ENCODE measurements at regions of chr1 and their contacts with region 1.

Region 1: GRCh38 chr1:205967555-205968335 is 24.5 kb upstream of the SLC26A9 start:
- DNase-seq: no peak
- ATAC-seq: no peak
- H3K4me3 Mint-ChIP-seq: no peak overlapping the region
- H3K27ac Mint-ChIP-seq: no peak overlapping the region
- H3K4me1 Mint-ChIP-seq: no peaks in the 10 kb centered on the region
- H3K27me3 Mint-ChIP-seq: no peaks in the 10 kb centered on the region

Region 2: DNA sequence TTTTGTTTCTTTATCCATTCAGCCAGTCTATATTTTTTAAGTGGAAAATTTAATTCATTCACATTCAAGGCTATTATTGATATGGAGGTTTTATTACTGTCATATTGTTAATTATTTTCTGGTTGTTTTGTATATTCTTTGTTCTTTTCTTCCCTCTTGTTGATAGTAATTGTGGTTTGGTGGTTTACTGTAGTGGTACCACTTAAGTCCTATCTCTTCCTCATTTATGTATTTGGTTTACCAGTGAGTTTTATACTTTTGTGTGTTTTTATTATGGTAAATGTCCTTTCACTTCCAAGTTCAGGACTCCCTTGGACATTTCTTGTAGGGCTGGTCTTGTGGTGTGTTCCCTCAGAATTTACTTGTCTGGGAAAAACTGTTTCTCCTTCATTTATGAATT is 89.7 kb before region 1 on chr1:
- CTCF ChIA-PET with region 1: no interaction called
- POLR2A ChIA-PET with region 1: interaction called, 10 read pairs
- intact Hi-C with region 1: no loop called
- DNase-seq: no peak
- ATAC-seq: no peak
- H3K4me3 Mint-ChIP-seq: no peak overlapping the region
- H3K27ac Mint-ChIP-seq: no peak overlapping the region
- H3K4me1 Mint-ChIP-seq: no peaks in the 10 kb centered on the region
- H3K27me3 Mint-ChIP-seq: peaks cover 8% of the 10 kb centered on the region

Region 3: GRCh38 chr1:205945056-205945455 is 22.7 kb before region 1 on chr1:
- CTCF ChIA-PET with region 1: no interaction called
- POLR2A ChIA-PET with region 1: no interaction called
- intact Hi-C with region 1: no loop called
- DNase-seq: no peak
- ATAC-seq: no peak
- H3K4me3 Mint-ChIP-seq: no peak overlapping the region
- H3K27ac Mint-ChIP-seq: no peak overlapping the region
- H3K4me1 Mint-ChIP-seq: no peaks in the 10 kb centered on the region
- H3K27me3 Mint-ChIP-seq: peaks cover 16% of the 10 kb centered on the region